Activated CD4-positive, alpha-beta memory T cell treated with anti-CD3 and anti-CD28 coated beads for 36 hours (primary cell): ENCODE measurements at regions of chr12 and their contacts with region 1.

Region 1: GRCh38 chr12:52082988-52083637 is 3.6 kb downstream of the SMIM41 start:
- DNase-seq: peak; percentile 74
- H3K4me3 Mint-ChIP-seq: no peak overlapping the region
- H3K27ac Mint-ChIP-seq: no peak overlapping the region
- H3K4me1 Mint-ChIP-seq: peaks cover 4% of the 10 kb centered on the region
- H3K27me3 Mint-ChIP-seq: no peaks in the 10 kb centered on the region

Region 2: GRCh38 chr12:52032804-52033502 is 50.2 kb before region 1 on chr12:
- CTCF ChIA-PET with region 1: interaction called, 438 read pairs
- POLR2A ChIA-PET with region 1: no interaction called
- intact Hi-C with region 1: no loop called
- DNase-seq: peak; percentile 96
- H3K4me3 Mint-ChIP-seq: peak overlapping the region; percentile 71
- H3K27ac Mint-ChIP-seq: peak overlapping the region; percentile 70
- H3K4me1 Mint-ChIP-seq: peaks cover 37% of the 10 kb centered on the region
- H3K27me3 Mint-ChIP-seq: no peaks in the 10 kb centered on the region

Region 3: DNA sequence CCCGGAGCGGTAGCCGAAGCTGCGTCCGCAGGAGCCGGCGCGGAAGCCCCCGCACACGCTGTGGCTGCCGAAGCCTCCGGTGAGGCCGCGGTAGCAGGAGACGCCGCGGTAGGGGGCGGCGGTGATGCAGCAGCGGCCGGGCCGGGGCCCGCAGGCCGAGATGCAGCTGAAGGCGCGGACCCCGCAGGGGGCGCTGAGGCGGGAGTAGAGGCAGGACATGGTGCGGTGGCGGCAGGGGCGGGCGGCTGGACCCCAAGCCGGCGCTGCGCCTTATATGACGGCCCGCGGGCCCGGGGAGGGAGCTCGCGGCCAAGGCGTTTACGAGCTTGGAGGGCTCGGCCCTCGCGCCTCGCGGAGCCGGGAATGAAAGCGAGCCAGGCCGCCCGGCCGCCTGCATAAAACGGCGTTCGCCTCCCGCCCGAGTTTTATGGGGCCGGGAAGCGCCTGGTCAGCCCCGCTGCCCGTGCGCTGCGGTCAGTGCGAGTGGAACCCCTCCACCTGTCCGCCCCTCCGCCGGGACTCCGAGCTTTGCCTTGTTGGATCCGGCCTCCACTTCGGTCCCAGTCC is 175.3 kb after region 1 on chr12:
- CTCF ChIA-PET with region 1: no interaction called
- POLR2A ChIA-PET with region 1: no interaction called
- intact Hi-C with region 1: no loop called
- DNase-seq: no peak
- H3K4me3 Mint-ChIP-seq: no peak overlapping the region
- H3K27ac Mint-ChIP-seq: no peak overlapping the region
- H3K4me1 Mint-ChIP-seq: no peaks in the 10 kb centered on the region
- H3K27me3 Mint-ChIP-seq: peaks cover 43% of the 10 kb centered on the region

Region 4: GRCh38 chr12:52566847-52567291 is 483.8 kb after region 1 on chr12:
- CTCF ChIA-PET with region 1: no interaction called
- POLR2A ChIA-PET with region 1: no interaction called
- intact Hi-C with region 1: no loop called
- DNase-seq: no peak
- H3K4me3 Mint-ChIP-seq: no peak overlapping the region
- H3K27ac Mint-ChIP-seq: no peak overlapping the region
- H3K4me1 Mint-ChIP-seq: no peaks in the 10 kb centered on the region
- H3K27me3 Mint-ChIP-seq: peaks cover 14% of the 10 kb centered on the region

Region 5: GRCh38 chr12:53145383-53146260 is 1062.5 kb after region 1 on chr12:
- CTCF ChIA-PET with region 1: no interaction called
- POLR2A ChIA-PET with region 1: no interaction called
- intact Hi-C with region 1: no loop called
- DNase-seq: no peak
- H3K4me3 Mint-ChIP-seq: no peak overlapping the region
- H3K27ac Mint-ChIP-seq: no peak overlapping the region
- H3K4me1 Mint-ChIP-seq: no peaks in the 10 kb centered on the region
- H3K27me3 Mint-ChIP-seq: no peaks in the 10 kb centered on the region